Caco-2 (cell line): ENCODE measurements at regions of chr7 and their contacts with region 1.

Region 1: DNA sequence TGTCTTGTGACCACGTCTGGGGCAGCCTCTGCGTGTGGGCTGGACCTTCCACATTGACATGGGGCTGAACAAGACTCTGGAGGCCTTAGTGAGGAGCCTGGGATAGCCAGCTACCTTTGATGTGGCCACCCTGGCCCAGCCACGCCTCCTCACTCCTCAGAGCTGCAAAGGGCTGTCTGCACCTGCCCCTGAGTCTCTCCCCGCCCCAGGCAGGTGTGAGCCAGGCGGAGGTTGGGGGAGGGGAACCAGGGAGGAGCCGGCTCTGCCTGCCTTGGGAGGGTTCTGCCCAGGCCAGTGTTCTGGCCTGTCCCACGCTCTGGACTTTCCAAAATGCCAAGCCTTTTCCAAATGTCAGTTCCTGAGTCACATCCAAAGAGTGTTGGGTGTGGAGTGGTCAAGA is 72.2 kb downstream of the GTF2IRD1 start:
- DNase-seq: peak; percentile 84 to 88
- H3K4me3 ChIP-seq: no peak overlapping the region
- H3K4me3 Mint-ChIP-seq: no peak overlapping the region
- H3K27ac Mint-ChIP-seq: peak overlapping the region; percentile 66
- H3K4me1 ChIP-seq: peaks cover 7% of the 10 kb centered on the region
- H3K4me1 Mint-ChIP-seq: peaks cover 14% of the 10 kb centered on the region
- H3K27me3 ChIP-seq: no peaks in the 10 kb centered on the region
- H3K27me3 Mint-ChIP-seq: no peaks in the 10 kb centered on the region
- CTCF ChIP-seq: no peak

Region 2: DNA sequence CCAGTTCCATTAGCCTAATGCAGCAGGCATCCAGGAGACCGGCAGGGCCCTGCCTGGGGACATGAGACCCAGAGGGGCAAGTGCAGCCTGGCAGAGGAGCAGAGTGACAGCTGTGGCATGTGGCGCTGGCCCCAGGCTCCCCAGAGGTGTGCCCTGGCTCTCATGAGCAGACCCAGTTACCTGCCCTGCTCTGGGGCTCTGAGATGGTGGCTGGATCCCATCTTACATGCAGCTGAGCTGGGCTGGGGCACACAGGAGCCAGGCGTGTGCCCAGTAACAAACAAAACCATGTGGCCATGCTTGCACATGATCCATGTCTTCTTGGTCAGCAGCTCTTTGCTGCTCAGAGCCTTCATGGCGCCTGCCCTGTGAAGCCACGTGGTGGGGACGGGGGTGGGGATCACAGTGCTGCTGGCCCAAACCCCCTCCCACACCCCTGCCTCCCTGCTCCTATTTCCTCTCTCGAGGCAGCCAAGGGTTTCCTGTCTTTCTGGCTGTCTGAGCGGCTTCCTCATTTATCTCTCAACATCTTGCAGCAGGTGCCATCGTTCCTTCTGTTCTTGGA is 91.4 kb after region 1 on chr7:
- CTCF ChIA-PET with region 1: no interaction called
- POLR2A ChIA-PET with region 1: interaction called, 12 read pairs
- intact Hi-C with region 1: no loop called
- DNase-seq: no peak
- H3K4me3 ChIP-seq: no peak overlapping the region
- H3K4me3 Mint-ChIP-seq: no peak overlapping the region
- H3K27ac Mint-ChIP-seq: no peak overlapping the region
- H3K4me1 ChIP-seq: no peaks in the 10 kb centered on the region
- H3K4me1 Mint-ChIP-seq: peaks cover 5% of the 10 kb centered on the region
- H3K27me3 ChIP-seq: no peaks in the 10 kb centered on the region
- H3K27me3 Mint-ChIP-seq: no peaks in the 10 kb centered on the region
- CTCF ChIP-seq: no peak